PC-9 (cell line): ENCODE measurements at regions of chr2 and their contacts with region 1.

Region 1: DNA sequence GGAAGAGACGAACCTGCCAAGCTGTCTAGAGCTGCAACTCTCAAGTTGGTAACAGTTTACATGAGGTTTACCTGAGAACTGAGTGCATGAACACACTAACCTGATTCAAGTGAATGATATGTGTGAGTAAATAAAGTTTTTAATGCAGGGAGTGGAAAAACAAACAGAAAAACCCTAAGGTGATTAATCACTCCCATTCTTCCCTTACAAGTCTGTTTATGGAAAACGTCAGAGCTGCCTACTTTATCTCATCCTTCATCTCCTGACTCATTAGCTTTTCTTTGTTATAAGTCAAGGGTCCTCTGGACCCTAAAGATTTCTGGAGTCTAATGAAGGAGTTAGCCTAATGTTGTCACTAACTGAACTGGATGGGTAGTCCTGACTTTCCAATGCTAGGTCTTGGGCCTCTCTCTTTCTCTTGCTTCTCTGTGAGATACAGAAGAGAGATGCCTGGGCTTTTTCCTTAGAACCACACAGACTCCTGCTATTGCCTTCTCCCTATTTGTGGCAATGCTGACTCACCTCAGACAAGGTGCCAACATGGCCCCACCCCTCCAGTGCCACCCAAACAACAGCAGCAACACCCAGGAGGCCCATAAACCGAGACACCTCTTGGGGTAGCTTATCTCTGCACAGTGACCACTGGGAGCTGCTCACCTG is 952.4 kb downstream of the EPHA4 start:
- DNase-seq: peak; percentile 77 to 96
- H3K4me3 ChIP-seq: peak overlapping the region; percentile 28; the same call in 1 of the 2 replicates
- H3K27ac ChIP-seq: peak overlapping the region; percentile 93
- H3K4me1 ChIP-seq: peaks cover 39% of the 10 kb centered on the region
- H3K27me3 ChIP-seq: no peaks in the 10 kb centered on the region
- CTCF ChIP-seq: no peak

Region 2: DNA sequence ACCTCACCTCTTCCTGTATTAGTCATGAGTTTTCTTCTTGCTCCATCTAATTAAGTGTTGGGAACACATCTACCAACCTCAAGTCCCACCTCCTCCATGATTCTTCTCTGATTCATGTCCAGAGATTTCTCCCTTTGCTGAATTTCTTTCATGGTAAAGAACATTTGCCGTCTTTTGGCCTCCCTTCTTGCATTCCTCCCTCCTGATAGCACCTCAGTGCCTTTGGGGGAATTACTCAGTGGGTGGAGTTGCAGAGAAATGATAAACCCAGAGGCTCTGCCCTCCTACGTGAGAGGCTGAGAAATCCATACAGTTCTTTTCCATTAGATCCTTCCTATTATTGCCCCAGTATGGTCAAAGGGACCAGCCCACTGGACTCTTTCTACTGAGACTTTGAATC is 340.3 kb before region 1 on chr2:
- CTCF ChIA-PET with region 1: interaction called, 3 read pairs
- POLR2A ChIA-PET with region 1: no interaction called
- intact Hi-C with region 1: loop called (anchors 1 kb)
- DNase-seq: peak; percentile 29 to 69
- H3K4me3 ChIP-seq: no peak overlapping the region
- H3K27ac ChIP-seq: peak overlapping the region; percentile 48
- H3K4me1 ChIP-seq: peaks cover 49% of the 10 kb centered on the region
- H3K27me3 ChIP-seq: no peaks in the 10 kb centered on the region
- CTCF ChIP-seq: no peak

Region 3: DNA sequence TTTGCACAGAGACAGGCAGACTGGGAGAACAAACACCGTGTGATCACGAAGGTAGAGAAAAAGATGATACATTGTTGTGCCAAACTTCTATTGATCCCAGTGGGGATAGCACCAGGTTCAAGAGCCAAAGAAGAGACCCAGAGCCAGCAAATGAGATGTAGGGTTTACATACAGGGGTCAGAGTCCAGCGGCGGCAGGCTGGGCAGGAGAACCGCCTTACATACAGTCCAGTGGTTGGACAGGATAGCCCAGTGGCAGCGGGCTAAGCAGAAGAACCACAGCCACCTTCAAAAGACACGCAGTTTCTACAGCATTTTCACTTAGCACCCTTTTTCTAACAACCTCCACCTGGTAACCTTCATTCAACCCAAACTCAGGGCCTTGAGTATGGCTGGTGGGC is 59.5 kb before region 1 on chr2:
- CTCF ChIA-PET with region 1: no interaction called
- POLR2A ChIA-PET with region 1: no interaction called
- intact Hi-C with region 1: no loop called
- DNase-seq: no peak
- H3K4me3 ChIP-seq: no peak overlapping the region
- H3K27ac ChIP-seq: no peak overlapping the region
- H3K4me1 ChIP-seq: peaks cover 4% of the 10 kb centered on the region; the same call in 1 of the 2 replicates
- H3K27me3 ChIP-seq: no peaks in the 10 kb centered on the region
- CTCF ChIP-seq: no peak